BJ (cell line): ENCODE measurements at regions of chr9 and their contacts with region 1.

Region 1: GRCh38 chr9:98207606-98208005 is 15.2 kb upstream of the CORO2A start:
- DNase-seq: no peak
- H3K4me3 ChIP-seq: no peak overlapping the region
- H3K27me3 ChIP-seq: no peaks in the 10 kb centered on the region
- CTCF ChIP-seq: peak; percentile 26; the same call in 1 of the 2 replicates

Region 2: DNA sequence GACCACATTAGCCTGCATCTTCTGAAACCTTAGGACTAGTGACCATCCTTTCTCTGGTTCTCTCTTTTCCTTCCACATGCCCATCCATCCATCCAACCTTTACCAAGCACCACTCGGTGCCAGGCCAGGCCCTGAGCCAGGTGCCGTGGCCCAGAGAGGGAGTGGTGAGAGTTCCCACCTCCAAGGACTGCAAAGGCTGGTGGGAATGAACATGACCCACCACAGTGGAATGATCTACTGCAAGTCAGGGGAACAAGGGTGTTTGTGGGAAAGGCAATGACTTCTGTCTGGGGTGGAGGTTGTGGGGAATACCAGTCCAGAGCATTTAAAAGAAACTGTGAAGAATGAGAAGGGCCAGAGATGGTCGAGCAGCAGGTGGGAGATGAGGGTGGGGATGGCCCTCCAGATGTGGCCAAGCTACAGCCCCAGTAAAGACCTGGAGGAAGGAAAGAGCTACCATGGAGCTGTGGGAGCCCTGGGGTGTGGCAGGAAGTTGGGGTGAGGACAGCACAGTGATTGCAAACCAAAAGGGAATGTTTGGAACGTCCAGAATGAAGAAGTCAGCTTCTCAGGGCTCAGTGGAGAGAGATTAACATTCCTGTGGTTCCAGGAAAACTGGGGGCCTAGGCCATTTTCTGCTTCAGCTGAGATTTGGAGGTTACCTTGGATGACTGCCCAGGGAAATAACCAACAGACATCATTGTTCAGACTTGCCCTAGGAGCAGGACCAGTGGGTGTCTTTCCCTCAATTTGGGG is 15.5 kb after region 1 on chr9:
- CTCF ChIA-PET with region 1: interaction called, 26 read pairs
- POLR2A ChIA-PET with region 1: no interaction called
- DNase-seq: peak; percentile 99
- H3K4me3 ChIP-seq: no peak overlapping the region
- H3K27me3 ChIP-seq: no peaks in the 10 kb centered on the region
- CTCF ChIP-seq: no peak

Region 3: DNA sequence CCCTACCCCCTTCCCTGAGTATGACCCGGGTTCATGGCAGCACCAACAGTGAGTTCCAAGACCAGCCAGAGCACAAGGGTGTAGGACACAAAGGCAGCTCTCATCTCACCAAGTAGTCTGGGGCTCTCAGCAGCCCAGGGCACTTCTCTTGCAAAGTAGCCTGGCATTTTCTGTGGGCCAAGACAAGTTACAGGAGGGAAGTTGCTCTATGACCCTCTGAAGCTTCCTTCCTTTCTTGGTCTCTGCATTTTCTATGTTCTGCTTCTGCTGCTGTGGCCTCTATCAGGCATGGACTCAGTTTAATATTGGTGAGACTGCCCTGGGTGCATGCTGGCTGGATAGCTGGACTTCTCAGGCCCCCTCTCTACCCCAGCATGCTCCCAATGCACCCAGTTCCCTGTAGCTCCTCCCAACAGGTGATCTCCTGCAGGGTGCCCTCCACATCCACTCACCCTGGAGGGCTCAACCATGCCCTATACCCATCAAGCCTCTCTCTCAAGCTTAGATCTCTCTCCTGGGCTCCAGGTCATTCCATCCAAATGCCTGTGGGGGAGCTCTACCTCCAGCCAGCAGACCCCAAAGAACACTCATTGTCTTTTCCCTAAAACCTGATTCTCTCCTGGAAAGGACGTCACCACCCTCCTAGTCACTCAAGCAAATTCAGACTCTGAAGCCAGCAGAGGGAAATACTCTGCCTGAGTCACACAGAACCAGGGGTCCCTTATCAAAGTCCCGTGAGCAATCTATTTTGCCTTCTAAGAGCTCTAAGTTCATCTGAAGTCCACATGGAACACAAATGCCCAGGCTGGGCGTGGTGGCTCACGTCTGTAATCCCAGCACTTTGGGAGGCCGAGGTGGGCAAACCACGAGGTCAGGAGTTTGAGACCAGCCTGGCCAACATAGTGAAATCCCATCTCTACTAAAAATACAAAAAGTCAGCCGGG is 34.0 kb after region 1 on chr9:
- CTCF ChIA-PET with region 1: interaction called, 3 read pairs
- POLR2A ChIA-PET with region 1: interaction called, 17 read pairs
- DNase-seq: no peak
- H3K4me3 ChIP-seq: no peak overlapping the region
- H3K27me3 ChIP-seq: no peaks in the 10 kb centered on the region
- CTCF ChIP-seq: no peak

Region 4: GRCh38 chr9:98255578-98256296 is 48.1 kb after region 1 on chr9 and contains the start of gene TBC1D2:
- CTCF ChIA-PET with region 1: interaction called, 75 read pairs
- POLR2A ChIA-PET with region 1: interaction called, 5 read pairs
- DNase-seq: peak; percentile 70
- H3K4me3 ChIP-seq: peak within 1 kb of the TSS; percentile 80
- H3K27me3 ChIP-seq: no peaks in the 10 kb centered on the region
- CTCF ChIP-seq: peak; percentile 40
- polyA plus RNA-seq, gene TBC1D2: 38.8 and 70.3 TPM in 2 replicates

Region 5: GRCh38 chr9:98263482-98264357 is 56.1 kb after region 1 on chr9:
- CTCF ChIA-PET with region 1: interaction called, 55 read pairs
- POLR2A ChIA-PET with region 1: no interaction called
- DNase-seq: no peak
- H3K4me3 ChIP-seq: no peak overlapping the region
- H3K27me3 ChIP-seq: no peaks in the 10 kb centered on the region
- CTCF ChIP-seq: peak; percentile 95

Region 6: GRCh38 chr9:98873951-98874371 is 666.4 kb after region 1 on chr9:
- CTCF ChIA-PET with region 1: no interaction called
- POLR2A ChIA-PET with region 1: no interaction called
- DNase-seq: no peak
- H3K4me3 ChIP-seq: no peak overlapping the region
- H3K27me3 ChIP-seq: peaks cover 3% of the 10 kb centered on the region
- CTCF ChIP-seq: no peak